Activated B cell treated with CpG ODN at 0.5 μM for 24 hours (primary cell): ENCODE measurements at regions of chr10 and their contacts with region 1.

Region 1: GRCh38 chr10:5446390-5446926 is 34.1 kb downstream of the NET1 start:
- DNase-seq: peak; percentile 90
- ATAC-seq: peak; percentile 91
- H3K4me3 Mint-ChIP-seq: peak overlapping the region; percentile 86
- H3K27ac Mint-ChIP-seq: peak overlapping the region; percentile 87
- H3K4me1 Mint-ChIP-seq: peaks cover 56% of the 10 kb centered on the region
- H3K27me3 Mint-ChIP-seq: no peaks in the 10 kb centered on the region
- CTCF ChIP-seq: no peak

Region 2: GRCh38 chr10:5385224-5385623 is 61.2 kb before region 1 on chr10:
- CTCF ChIA-PET with region 1: no interaction called
- POLR2A ChIA-PET with region 1: no interaction called
- intact Hi-C with region 1: no loop called
- DNase-seq: no peak
- ATAC-seq: no peak
- H3K4me3 Mint-ChIP-seq: no peak overlapping the region
- H3K27ac Mint-ChIP-seq: no peak overlapping the region
- H3K4me1 Mint-ChIP-seq: no peaks in the 10 kb centered on the region
- H3K27me3 Mint-ChIP-seq: no peaks in the 10 kb centered on the region
- CTCF ChIP-seq: no peak

Region 3: GRCh38 chr10:5412277-5412941 is 34.0 kb before region 1 on chr10 and contains the start of gene NET1:
- CTCF ChIA-PET with region 1: no interaction called
- POLR2A ChIA-PET with region 1: no interaction called
- intact Hi-C with region 1: loop called (anchors 1 kb)
- DNase-seq: peak; percentile 60
- ATAC-seq: peak; percentile 85
- H3K4me3 Mint-ChIP-seq: peak within 1 kb of the TSS; percentile 84
- H3K27ac Mint-ChIP-seq: no peak within 1 kb of the TSS
- H3K4me1 Mint-ChIP-seq: peaks cover 3% of the 10 kb centered on the region
- H3K27me3 Mint-ChIP-seq: peaks cover 12% of the 10 kb centered on the region
- CTCF ChIP-seq: no peak
- total RNA-seq, gene NET1: 19.0 and 22.5 TPM in 2 replicates

Region 4: DNA sequence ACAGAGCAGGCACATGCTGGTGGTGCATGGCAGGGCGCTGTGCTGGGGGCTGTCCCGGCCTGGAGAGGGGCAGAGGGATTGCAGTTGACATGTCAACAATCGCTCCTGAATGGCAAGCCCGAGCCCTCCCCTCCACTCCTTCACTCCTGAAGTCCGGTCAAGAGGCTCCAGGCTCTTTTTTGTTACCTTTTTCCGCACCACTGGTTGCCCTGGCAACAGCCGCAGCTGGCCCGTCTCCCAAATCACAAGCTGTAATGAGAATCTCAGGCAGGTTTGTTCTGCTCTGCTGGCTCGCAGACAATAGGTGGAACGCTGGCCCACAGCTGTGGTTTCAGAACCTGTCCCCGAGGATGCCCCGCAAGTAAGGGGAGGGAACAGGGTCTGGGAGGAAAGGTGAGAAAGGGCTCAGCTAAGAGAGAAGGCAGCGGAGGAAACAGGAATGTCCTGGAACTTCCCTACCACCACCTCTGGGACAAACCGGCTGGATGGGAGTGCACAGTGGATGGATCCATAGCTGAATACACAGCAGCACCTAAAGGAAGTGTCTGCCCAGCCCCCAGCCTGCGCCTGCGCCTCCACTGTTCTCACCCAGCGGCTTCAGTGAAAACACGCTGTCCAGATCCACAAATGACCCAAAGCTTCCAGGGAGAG is 137.2 kb after region 1 on chr10:
- CTCF ChIA-PET with region 1: no interaction called
- POLR2A ChIA-PET with region 1: interaction called, 21 read pairs
- intact Hi-C with region 1: loop called (anchors 1 kb)
- DNase-seq: no peak
- ATAC-seq: peak; percentile 45
- H3K4me3 Mint-ChIP-seq: peak overlapping the region; percentile 58
- H3K27ac Mint-ChIP-seq: peak overlapping the region; percentile 41
- H3K4me1 Mint-ChIP-seq: peaks cover 50% of the 10 kb centered on the region
- H3K27me3 Mint-ChIP-seq: peaks cover 11% of the 10 kb centered on the region
- CTCF ChIP-seq: no peak

Region 5: GRCh38 chr10:5623081-5623748 is 176.8 kb after region 1 on chr10:
- CTCF ChIA-PET with region 1: interaction called, 431 read pairs
- POLR2A ChIA-PET with region 1: interaction called, 8 read pairs
- intact Hi-C with region 1: loop called (anchors 1 kb)
- DNase-seq: peak; percentile 75
- ATAC-seq: peak; percentile 99
- H3K4me3 Mint-ChIP-seq: no peak overlapping the region
- H3K27ac Mint-ChIP-seq: no peak overlapping the region
- H3K4me1 Mint-ChIP-seq: peaks cover 4% of the 10 kb centered on the region
- H3K27me3 Mint-ChIP-seq: no peaks in the 10 kb centered on the region
- CTCF ChIP-seq: no peak

Region 6: DNA sequence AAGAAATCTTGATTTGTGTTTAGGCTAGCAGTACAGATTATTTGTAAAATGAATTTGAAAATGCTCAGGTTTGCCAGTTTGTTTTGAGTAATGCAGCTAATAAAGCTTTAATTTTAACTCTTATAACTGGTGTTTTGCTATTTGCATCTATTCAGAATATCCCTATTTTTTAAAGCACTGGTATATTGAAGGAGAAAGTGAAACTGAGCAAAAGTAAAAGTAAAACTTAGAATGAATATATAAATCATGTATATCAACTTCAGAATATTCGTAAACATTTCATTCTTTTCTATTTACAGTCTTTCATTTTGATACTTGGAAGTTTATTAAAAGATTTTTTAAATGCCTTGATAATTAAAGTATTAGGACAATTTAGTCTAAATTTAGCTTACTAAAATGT is 264.4 kb after region 1 on chr10:
- CTCF ChIA-PET with region 1: no interaction called
- POLR2A ChIA-PET with region 1: no interaction called
- intact Hi-C with region 1: loop called (anchors 10 kb)
- DNase-seq: no peak
- ATAC-seq: no peak
- H3K4me3 Mint-ChIP-seq: peak overlapping the region; percentile 52
- H3K27ac Mint-ChIP-seq: no peak overlapping the region
- H3K4me1 Mint-ChIP-seq: peaks cover 69% of the 10 kb centered on the region
- H3K27me3 Mint-ChIP-seq: no peaks in the 10 kb centered on the region
- CTCF ChIP-seq: no peak

Region 7: DNA sequence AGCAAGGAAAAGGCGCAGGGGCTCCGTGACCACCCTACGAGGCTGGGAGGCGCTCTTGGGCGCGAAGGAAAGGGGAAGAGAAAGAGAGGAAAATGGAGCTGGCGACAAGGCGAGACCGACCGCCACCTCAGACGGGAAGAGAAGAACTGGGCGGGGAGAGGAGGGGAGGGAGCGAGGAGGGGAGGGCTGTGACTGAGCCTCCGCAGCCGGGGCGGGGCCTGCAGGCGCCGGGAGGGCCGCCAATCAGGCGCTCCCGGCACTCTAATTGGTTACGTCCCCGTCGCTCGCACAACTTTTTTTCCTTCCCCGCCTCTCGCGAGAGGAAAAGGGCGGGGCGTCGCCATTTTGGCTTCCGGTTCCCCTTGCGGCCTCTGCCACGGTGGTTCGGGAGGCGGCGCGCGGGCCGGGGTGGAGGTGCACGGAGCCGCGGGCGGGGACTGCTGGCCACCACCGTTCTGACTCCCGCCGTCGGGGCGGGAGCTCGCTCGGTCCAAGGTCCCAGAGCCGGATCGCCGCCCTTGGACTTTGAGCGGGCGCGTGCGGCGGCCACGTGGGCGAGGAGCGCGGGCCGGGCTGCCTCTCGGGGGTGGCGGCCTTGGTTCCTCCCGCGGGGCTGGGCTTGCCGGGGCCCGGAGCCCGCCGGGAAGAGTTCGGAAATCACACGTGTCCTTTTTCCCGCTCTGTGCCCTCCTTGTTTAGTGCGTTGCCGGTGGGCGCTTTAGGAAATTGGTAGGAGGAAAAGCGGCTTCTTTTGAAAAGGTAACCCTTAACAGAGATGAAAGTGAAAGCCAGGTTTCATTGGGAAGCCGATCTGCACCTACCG is 367.0 kb after region 1 on chr10 and contains the start of gene GDI2:
- CTCF ChIA-PET with region 1: interaction called, 3 read pairs
- POLR2A ChIA-PET with region 1: interaction called, 3 read pairs
- intact Hi-C with region 1: loop called (anchors 5 kb)
- DNase-seq: peak; percentile 96
- ATAC-seq: peak; percentile 82
- H3K4me3 Mint-ChIP-seq: peak within 1 kb of the TSS; percentile 91
- H3K27ac Mint-ChIP-seq: peak within 1 kb of the TSS; percentile 94
- H3K4me1 Mint-ChIP-seq: peaks cover 79% of the 10 kb centered on the region
- H3K27me3 Mint-ChIP-seq: no peaks in the 10 kb centered on the region
- CTCF ChIP-seq: no peak
- total RNA-seq, gene GDI2: 289 and 301 TPM in 2 replicates

Region 8: GRCh38 chr10:6151087-6151977 is 704.9 kb after region 1 on chr10:
- CTCF ChIA-PET with region 1: no interaction called
- POLR2A ChIA-PET with region 1: no interaction called
- intact Hi-C with region 1: loop called (anchors 10 kb)
- DNase-seq: peak; percentile 53
- ATAC-seq: peak; percentile 83
- H3K4me3 Mint-ChIP-seq: peak overlapping the region; percentile 79
- H3K27ac Mint-ChIP-seq: peak overlapping the region; percentile 85
- H3K4me1 Mint-ChIP-seq: peaks cover 45% of the 10 kb centered on the region
- H3K27me3 Mint-ChIP-seq: no peaks in the 10 kb centered on the region
- CTCF ChIP-seq: no peak